Ovary (tissue), 10 donors: ENCODE measurements at regions of chr2 and their contacts with region 1.

Region 1: GRCh38 chr2:165953655-165954606 is at the start of gene TTC21B:
- DNase-seq: peak; percentile 94 to 96 (median 95)
- H3K4me3 ChIP-seq: peak within 1 kb of the TSS; percentile 68
- H3K27ac ChIP-seq: peak within 1 kb of the TSS; percentile 61 to 67
- H3K4me1 ChIP-seq: peaks cover 9% of the 10 kb centered on the region
- H3K27me3 ChIP-seq: no peaks in the 10 kb centered on the region
- CTCF ChIP-seq: peak; percentile 64 to 72 (median 69)
- EP300 ChIP-seq: no peak
- POLR2A ChIP-seq: peak; percentile 59
- total RNA-seq, gene TTC21B: 21.0 to 53.4 (median 23.1) TPM

Region 2: GRCh38 chr2:166127217-166128155 is 173.6 kb after region 1 on chr2 and contains the start of gene SCN1A:
- intact Hi-C with region 1: loop called in 1 of 4 experiments (anchors 10 kb)
- DNase-seq: no peak
- H3K4me3 ChIP-seq: no peak within 1 kb of the TSS
- H3K27ac ChIP-seq: no peak within 1 kb of the TSS
- H3K4me1 ChIP-seq: no peaks in the 10 kb centered on the region
- H3K27me3 ChIP-seq: no peaks in the 10 kb centered on the region
- CTCF ChIP-seq: peak in 1 of 3 donors; percentile 15
- EP300 ChIP-seq: no peak
- POLR2A ChIP-seq: no peak
- total RNA-seq, gene SCN1A: under 0.01 to 5.6 (median 0.34) TPM in 4 of 7 donors, not detected in the others